GM13976 (cell line): ENCODE measurements at regions of chr2 and their contacts with region 1.

Region 1: GRCh38 chr2:168118733-168119514 is 128.5 kb downstream of the STK39 start:
- DNase-seq: no peak
- CTCF ChIP-seq: peak; percentile 42

Region 2: DNA sequence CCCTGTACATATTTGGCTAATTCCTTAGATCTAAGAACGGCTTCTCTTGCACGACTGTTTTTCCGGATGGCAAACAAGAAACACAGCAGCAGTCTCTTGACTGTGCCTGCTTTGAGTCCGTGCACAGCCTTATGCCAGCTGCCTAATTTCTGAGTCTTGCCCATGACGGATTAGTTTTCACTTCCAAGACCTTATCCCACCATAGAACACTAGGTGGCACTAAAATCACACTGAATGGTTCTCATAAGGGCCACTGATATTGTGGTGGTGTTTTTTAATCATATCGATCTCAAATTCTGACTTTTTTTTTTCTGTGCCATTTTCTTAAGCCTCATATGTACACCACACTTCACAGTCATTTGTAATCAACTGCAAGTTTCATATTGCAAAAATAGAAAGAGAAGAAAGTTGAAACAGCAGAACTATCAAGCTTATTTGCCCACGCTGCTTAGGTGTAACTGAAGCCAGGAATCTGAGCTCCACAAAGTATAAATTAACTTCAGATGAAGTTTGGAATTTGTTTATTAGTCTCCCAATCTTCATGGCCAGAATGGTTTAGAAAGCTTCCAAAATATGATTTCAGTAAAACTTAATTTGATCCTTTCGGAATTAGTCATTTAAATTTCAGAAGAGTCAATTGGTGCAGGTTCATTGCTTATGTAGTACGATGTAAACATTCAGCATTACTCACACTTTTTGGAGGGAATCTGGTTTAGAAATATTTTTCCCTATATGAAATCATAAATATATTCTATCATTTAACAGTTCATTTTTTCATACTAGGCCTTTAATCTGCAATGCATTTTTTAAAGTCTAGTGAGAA is 1579.4 kb before region 1 on chr2:
- in situ Hi-C with region 1: loop called (anchors 25 kb)
- DNase-seq: peak; percentile 20
- CTCF ChIP-seq: peak; percentile 68

Region 3: GRCh38 chr2:166784296-166784946 is 1334.5 kb before region 1 on chr2:
- in situ Hi-C with region 1: no loop called
- DNase-seq: no peak
- CTCF ChIP-seq: no peak

Region 4: DNA sequence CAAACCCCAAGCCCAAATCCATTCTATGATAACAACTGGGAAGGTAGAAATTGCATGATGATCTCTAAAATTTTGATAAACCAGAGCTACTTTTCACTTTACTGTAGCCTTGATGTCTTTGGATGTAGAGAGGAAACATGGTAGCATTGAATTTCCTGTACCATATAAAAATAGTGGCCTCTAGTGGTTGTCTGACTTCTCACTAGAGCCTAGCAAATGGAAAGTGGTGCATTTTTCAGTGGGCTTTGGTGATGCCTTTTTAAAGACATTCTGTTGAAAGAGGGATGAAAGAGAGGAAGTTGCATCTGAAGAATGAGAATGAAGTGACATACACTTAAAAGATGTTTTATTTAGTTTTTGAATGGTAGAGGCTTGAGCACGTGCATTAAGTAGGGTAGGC is 568.5 kb before region 1 on chr2:
- in situ Hi-C with region 1: loop called (anchors 25 kb)
- DNase-seq: peak; percentile 13
- CTCF ChIP-seq: no peak

Region 5: DNA sequence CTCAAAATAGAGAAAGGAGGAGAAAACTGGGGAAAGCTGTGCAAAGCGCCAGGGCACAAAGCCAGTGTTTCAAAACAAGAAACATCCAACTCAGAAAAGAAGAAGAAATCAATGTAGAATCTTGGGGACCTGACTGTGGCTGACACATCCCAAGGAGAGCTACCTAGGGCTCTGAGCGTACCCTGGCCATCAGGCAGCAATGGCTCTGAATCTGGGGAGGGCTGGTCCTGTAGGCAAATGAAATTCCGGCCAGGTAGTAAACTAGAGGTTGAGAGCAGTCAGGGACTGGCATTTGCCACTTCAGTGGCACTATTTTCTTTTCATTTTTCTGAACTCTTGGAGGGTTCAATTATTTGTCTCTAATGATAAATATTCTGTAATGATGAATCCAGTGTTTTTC is 397.3 kb before region 1 on chr2:
- in situ Hi-C with region 1: no loop called
- DNase-seq: no peak
- CTCF ChIP-seq: no peak

Region 6: DNA sequence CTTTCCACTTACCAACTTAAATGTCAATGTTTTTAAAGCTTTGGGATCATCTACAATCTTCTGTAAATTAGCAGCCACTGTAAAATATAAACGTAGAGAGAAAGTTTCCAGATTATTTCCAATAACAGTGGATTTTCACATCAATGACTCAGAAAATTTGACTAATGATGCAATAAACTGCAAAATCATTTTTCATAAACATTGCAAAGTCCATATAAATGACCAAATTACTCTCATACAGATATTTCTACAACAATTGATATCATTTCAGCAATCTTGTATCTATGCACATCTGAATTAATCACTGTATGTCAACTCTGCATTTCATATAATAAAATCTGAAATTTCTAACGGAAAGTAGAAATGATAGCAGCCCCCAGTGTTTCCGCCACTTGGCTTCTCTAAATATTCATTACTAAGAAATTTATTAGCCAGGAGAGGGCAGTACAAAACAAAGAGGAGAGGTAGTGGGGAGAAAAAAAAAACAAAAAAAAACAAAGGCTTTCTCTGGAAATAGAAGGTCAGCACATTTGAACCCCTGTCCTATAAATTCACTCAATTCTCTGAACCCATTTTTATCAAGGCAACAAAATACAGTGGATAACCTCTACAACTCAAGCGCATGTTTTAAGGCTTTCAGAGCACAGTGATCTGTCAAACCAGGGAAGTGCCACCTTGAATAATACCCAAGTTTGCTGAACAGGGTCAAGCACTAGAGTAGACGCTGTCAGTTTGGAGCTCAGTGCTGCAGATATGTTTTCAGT is 154.1 kb before region 1 on chr2:
- in situ Hi-C with region 1: loop called (anchors 10 kb)
- DNase-seq: peak; percentile 6
- CTCF ChIP-seq: no peak

Region 7: GRCh38 chr2:168404764-168405163 is 285.8 kb after region 1 on chr2:
- in situ Hi-C with region 1: no loop called
- DNase-seq: no peak
- CTCF ChIP-seq: no peak